Lower leg skin (tissue), 4 donors: ENCODE measurements at regions of chr1 and their contacts with region 1.

Region 1: DNA sequence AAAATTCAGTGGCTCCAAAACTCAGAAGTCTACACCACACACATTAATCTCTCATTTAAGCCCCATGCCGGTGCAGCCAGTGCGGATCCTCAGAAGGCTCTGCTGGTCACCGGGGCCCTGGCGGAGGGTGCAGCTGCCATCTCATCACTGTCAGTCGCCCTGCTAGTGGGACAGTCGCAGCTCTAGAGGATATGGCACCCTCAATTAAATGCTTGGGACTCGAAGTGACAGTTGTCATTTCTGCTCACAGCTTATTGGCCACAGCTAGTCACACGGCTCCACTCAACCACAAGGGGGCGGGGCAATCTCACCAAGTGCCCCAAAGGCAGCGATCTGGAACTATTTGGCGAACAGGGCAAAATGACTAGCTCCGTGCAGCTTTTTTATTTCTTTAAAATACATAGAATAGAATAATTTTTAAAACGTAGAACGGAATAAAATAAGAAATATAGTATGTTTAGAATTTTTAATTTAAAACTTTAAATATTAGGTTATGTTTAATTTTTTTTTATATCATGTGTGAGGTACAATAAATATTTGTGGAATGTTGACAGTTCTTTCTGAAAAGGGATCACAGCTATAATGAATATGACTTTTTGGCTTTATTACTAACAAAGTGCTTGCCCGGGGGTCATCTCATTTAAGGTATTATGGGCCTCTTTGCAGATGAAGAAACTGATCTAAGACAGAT is 8.0 kb upstream of the MAN1C1 start:
- DNase-seq: peak; percentile 88 to 97
- H3K4me3 ChIP-seq: no peak overlapping the region
- CTCF ChIP-seq: peak in 1 of 3 donors; percentile 67
- POLR2A ChIP-seq: no peak

Region 2: GRCh38 chr1:25743826-25744581 is 135.4 kb after region 1 on chr1:
- intact Hi-C with region 1: loop called (anchors 5 kb)
- DNase-seq: peak; percentile 69 to 93
- H3K4me3 ChIP-seq: no peak overlapping the region
- CTCF ChIP-seq: no peak
- POLR2A ChIP-seq: no peak

Region 3: DNA sequence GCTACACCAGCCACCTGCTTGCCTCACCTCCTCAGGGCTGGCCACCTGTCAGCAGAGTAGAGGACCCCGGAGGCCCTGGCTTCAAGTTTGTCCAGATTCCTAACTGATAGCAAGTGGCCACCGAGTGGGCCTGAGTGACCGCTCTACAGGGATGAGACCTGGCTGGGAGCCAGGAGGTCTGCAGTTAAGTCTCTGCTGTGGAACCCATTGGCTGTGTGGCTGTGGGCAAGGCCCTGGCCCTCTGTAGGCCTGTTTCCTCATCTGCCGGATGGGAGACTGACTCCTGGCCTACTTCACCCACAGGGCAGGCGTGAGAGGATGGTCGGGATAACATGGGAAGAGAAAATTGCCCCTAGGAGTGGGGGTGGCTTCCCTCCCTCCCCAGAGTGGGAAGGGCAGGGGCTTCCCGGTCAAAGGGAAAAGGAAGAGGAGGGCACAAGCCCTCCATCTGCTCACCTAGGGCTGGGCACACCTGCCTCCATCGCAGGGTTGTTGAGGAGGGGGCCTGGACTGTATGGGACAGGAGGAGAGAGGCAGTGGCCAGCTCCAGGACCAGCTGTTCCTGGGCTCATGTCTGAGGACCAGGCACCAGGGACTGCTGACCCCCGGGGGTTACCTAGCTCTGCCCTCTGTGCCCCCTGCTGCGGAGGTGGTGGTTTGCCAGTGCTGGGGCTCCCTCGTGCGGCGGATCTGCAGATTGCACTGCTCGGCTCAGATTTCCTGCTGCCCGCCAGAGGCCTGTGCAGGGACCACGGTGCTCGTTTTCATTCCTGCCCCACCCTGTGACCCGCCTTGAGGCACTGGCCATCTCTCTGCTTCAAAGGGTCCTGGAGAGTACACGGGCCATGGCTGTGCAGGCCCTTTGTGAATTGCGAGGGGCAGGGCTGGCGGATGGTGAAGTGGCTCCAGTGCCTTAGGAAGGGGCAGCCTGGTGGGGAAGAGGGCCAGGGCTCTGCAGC is 202.0 kb after region 1 on chr1:
- intact Hi-C with region 1: loop called (anchors 5 kb)
- DNase-seq: peak in 1 of 2 donors; percentile 95
- H3K4me3 ChIP-seq: no peak overlapping the region
- CTCF ChIP-seq: peak in 1 of 3 donors; percentile 93
- POLR2A ChIP-seq: no peak